ENCODE measurements at regions of chr4 and their contacts with region 1.

Region 1: GRCh38 chr4:157992038-157992705 is 180.7 kb downstream of the GASK1B start:
- DNase-seq: peak in 2 of 4 donors; percentile 75 to 81
- ATAC-seq: peak; percentile 96
- H3K4me3 ChIP-seq: peak overlapping the region; percentile 12 to 27
- H3K27ac ChIP-seq: peak overlapping the region; percentile 63 to 83
- H3K4me1 ChIP-seq: peaks cover 3 to 12% of the 10 kb centered on the region in 2 donors
- H3K27me3 ChIP-seq: no peaks in the 10 kb centered on the region
- CTCF ChIP-seq: peak; percentile 57 to 62

Region 2: DNA sequence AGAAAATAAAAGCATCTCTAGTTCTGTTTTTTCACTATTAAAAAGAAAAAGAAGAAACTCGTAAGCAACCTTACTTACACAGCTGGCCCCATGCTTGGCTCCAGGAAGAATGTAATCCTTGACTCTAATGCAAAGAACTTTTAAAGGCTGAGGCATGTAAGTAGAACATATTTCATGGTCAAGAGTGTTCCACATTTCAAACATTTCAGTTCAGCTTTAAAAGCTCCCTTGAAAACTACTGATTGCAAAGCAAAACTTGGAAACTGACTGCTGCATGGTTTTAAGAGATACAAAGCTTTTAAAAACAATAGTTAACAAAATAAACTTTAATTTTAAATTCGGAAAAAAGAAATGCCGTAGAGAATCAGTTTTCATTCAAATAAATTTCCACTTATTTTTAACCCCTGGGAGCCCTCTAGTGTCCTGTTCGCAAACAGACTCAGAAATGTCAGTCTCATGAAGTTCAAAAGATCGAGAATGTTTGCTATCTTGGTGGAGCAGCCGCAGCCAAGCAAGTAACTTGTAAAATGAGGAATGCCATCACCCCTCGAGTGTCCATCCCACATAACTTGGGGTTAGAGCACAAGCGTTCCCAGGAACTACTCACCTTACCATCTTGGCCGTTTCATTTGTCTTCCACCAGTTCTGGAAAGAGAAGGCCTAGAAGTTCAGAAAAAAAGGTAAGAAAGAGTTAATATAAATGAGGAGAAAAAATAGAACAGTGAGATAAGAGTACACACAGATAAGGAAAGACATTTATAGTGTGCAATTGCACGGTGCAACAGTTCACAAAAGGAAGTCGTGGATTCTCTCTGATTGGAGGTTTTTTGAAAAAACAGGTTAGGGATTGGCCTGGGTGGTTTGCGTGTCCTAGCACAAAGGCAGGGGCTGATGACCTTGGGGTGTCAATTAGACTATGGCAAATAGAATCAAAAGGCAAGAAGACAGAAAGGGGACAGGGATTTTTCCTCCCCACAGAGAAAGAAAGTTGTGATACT is 180.4 kb after region 1 on chr4 and contains the start of gene GASK1B:
- intact Hi-C with region 1: loop called in 1 of 2 experiments (anchors 5 kb)
- DNase-seq: peak in 3 of 4 donors; percentile 35 to 37 (median 37)
- ATAC-seq: peak; percentile 62
- H3K4me3 ChIP-seq: peak within 1 kb of the TSS; percentile 25 to 53
- H3K27ac ChIP-seq: peak within 1 kb of the TSS; percentile 62 to 69
- H3K4me1 ChIP-seq: peaks cover 7 to 45% of the 10 kb centered on the region in 2 donors
- H3K27me3 ChIP-seq: peaks cover 0 to 14% of the 10 kb centered on the region in 2 donors
- CTCF ChIP-seq: peak; percentile 43 to 49
- polyA plus RNA-seq, gene GASK1B: 21.7 to 27.1 (median 23.2) TPM

Region 3: GRCh38 chr4:158371158-158371557 is 379.0 kb after region 1 on chr4:
- intact Hi-C with region 1: no loop called
- DNase-seq: no peak
- ATAC-seq: no peak
- H3K4me3 ChIP-seq: no peak overlapping the region
- H3K27ac ChIP-seq: no peak overlapping the region
- H3K4me1 ChIP-seq: no peaks in the 10 kb centered on the region
- H3K27me3 ChIP-seq: no peaks in the 10 kb centered on the region
- CTCF ChIP-seq: no peak